Right cardiac atrium (tissue), 5 donors: ENCODE measurements at regions of chr15 and their contacts with region 1.

Region 1: GRCh38 chr15:65980824-65981456 is 111.6 kb downstream of the RAB11A start:
- DNase-seq: peak; percentile 52 to 80 (median 79)
- ATAC-seq: peak; percentile 74 to 84
- H3K4me3 ChIP-seq: no peak overlapping the region
- H3K27ac ChIP-seq: no peak overlapping the region
- H3K4me1 ChIP-seq: no peaks in the 10 kb centered on the region
- H3K27me3 ChIP-seq: no peaks in the 10 kb centered on the region

Region 2: GRCh38 chr15:66188464-66188863 is 207.5 kb after region 1 on chr15:
- intact Hi-C with region 1: loop called in 2 of 4 experiments (anchors 10 kb)
- DNase-seq: no peak
- ATAC-seq: peak; percentile 21 to 25
- H3K4me3 ChIP-seq: no peak overlapping the region
- H3K27ac ChIP-seq: no peak overlapping the region
- H3K4me1 ChIP-seq: no peaks in the 10 kb centered on the region
- H3K27me3 ChIP-seq: no peaks in the 10 kb centered on the region

Region 3: DNA sequence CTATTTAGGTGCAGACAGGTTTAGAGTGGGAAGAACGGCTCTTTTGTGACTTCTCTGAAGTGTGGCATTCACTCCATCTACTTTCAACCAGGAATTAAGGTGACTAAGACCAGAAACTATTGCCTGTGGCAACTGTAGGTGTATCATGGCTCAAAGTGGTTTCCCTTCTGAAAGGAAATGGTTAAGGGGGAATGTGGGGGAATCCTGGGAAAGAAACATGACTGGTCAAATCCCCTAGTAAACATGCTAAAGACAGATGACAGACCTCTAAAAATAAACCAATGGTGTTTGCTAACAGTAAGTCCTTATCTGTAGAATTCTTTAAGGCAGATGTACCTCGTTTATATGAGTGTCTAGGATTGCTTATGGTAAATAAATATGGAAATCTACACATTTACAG is 215.7 kb after region 1 on chr15:
- intact Hi-C with region 1: loop called in 1 of 4 experiments (anchors 10 kb)
- DNase-seq: no peak
- ATAC-seq: no peak
- H3K4me3 ChIP-seq: no peak overlapping the region
- H3K27ac ChIP-seq: no peak overlapping the region
- H3K4me1 ChIP-seq: no peaks in the 10 kb centered on the region
- H3K27me3 ChIP-seq: no peaks in the 10 kb centered on the region

Region 4: GRCh38 chr15:66287461-66288057 is 306.6 kb after region 1 on chr15:
- intact Hi-C with region 1: loop called in 2 of 4 experiments (anchors 5 to 10 kb)
- DNase-seq: no peak
- ATAC-seq: no peak
- H3K4me3 ChIP-seq: no peak overlapping the region
- H3K27ac ChIP-seq: no peak overlapping the region
- H3K4me1 ChIP-seq: no peaks in the 10 kb centered on the region
- H3K27me3 ChIP-seq: no peaks in the 10 kb centered on the region

Region 5: GRCh38 chr15:66293419-66294156 is 312.6 kb after region 1 on chr15 and contains the start of gene DIS3L:
- intact Hi-C with region 1: loop called in 2 of 4 experiments (anchors 5 to 10 kb)
- DNase-seq: peak; percentile 71 to 88 (median 84)
- ATAC-seq: peak; percentile 94
- H3K4me3 ChIP-seq: peak within 1 kb of the TSS; percentile 98
- H3K27ac ChIP-seq: peak within 1 kb of the TSS; percentile 99
- H3K4me1 ChIP-seq: no peaks in the 10 kb centered on the region
- H3K27me3 ChIP-seq: no peaks in the 10 kb centered on the region
- total RNA-seq, gene DIS3L: 37.7 to 45.2 (median 42.6) TPM